ENCODE measurements at regions of chr4 and their contacts with region 1.

Region 1: DNA sequence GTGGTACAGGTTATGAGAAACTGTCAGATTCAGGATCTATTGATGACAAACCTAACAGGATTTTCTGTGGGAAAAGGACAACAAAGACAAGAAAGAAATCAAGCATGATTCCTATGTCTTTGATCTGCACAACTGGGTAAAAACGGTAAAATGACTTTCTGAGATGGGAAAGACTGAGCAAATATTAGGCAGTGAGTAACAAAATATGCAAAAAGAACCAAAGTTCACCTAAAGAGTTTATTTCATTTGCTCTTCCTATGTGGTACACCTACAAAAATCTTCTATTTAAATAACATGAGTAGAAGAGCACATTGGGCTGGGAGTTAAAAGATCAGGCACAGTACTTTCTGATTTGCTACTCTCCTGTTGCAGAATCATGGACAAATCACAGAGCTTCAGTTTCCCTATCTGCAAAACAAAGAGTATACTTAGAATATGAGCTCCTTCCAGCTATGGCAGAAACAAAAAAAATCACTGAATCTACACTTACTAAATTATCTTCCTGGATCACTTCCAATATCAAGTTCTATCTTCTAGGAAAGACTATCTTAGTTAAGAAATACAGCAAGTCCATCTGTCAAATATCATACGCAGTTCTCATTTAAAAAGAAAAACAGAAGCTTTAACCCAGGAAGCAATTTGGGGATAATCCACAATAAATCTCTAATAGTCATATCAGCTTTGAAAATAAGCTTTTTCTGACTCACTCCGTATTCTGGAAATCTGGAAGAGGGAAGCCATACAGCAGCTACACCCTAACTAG is 37.4 kb downstream of the NFXL1 start:
- DNase-seq: peak; percentile 75
- ATAC-seq: peak; percentile 89
- H3K4me3 ChIP-seq: no peak overlapping the region
- H3K27ac ChIP-seq: peak overlapping the region; percentile 49
- H3K4me1 ChIP-seq: peaks cover 44% of the 10 kb centered on the region
- H3K27me3 ChIP-seq: no peaks in the 10 kb centered on the region
- CTCF ChIP-seq: no peak
- EP300 ChIP-seq: peak in 1 of 2 experiments; percentile 69; a peak in 2 of 4 replicates
- POLR2A ChIP-seq: no peak
- RAD21 ChIP-seq: no peak

Region 2: DNA sequence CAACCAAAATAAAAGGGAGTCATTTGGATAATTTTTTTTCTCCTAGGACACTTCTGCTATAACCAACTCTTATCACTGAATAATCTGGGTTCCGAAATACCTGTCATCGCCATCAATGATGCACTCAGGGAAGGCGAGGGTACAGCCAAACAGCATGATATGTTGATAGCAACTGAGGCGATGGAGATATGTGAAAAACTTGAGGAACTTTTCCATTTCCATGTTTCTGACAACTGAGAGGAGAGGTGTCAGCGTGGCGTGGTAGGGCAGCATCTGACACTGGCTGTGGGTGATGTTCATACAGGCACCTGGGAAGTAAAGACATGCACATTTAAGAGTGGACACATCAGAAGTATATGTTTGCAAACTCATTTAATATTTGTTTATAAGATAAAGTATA is 113.7 kb before region 1 on chr4:
- CTCF ChIA-PET with region 1: no interaction called
- POLR2A ChIA-PET with region 1: no interaction called
- in situ Hi-C with region 1: no loop called
- intact Hi-C with region 1: no loop called
- DNase-seq: no peak
- ATAC-seq: no peak
- H3K4me3 ChIP-seq: no peak overlapping the region
- H3K27ac ChIP-seq: no peak overlapping the region
- H3K4me1 ChIP-seq: no peaks in the 10 kb centered on the region
- H3K27me3 ChIP-seq: no peaks in the 10 kb centered on the region
- CTCF ChIP-seq: no peak
- EP300 ChIP-seq: no peak
- POLR2A ChIP-seq: no peak
- RAD21 ChIP-seq: no peak

Region 3: GRCh38 chr4:47914220-47914925 is 37.4 kb after region 1 on chr4 and contains the start of gene NFXL1:
- CTCF ChIA-PET with region 1: no interaction called
- POLR2A ChIA-PET with region 1: interaction called, 5 read pairs
- in situ Hi-C with region 1: no loop called
- intact Hi-C with region 1: loop called (anchors 5 kb)
- DNase-seq: peak; percentile 95
- ATAC-seq: peak; percentile 97
- H3K4me3 ChIP-seq: peak within 1 kb of the TSS; percentile 80 to 96 (median 96)
- H3K27ac ChIP-seq: peak within 1 kb of the TSS; percentile 87
- H3K4me1 ChIP-seq: peaks cover 40% of the 10 kb centered on the region
- H3K27me3 ChIP-seq: no peaks in the 10 kb centered on the region; a peak in 1 of 5 replicates
- CTCF ChIP-seq: no peak
- EP300 ChIP-seq: 0 out of 4 replicates have a peak, but pooled peaks of 1 of the 2 experiments have one; percentile 23
- POLR2A ChIP-seq: peak; percentile 97 to 98
- RAD21 ChIP-seq: no peak
- total RNA-seq, gene NFXL1: 18.6 and 22.6 TPM in 2 replicates